ENCODE measurements at regions of chr17 and their contacts with region 1.

Region 1: GRCh38 chr17:66906321-66907278 is 57.9 kb upstream of the CACNG4 start:
- DNase-seq: peak; percentile 33
- H3K4me3 Mint-ChIP-seq: no peak overlapping the region
- H3K27ac Mint-ChIP-seq: no peak overlapping the region
- H3K4me1 Mint-ChIP-seq: peaks cover 9% of the 10 kb centered on the region
- H3K27me3 Mint-ChIP-seq: no peaks in the 10 kb centered on the region

Region 2: DNA sequence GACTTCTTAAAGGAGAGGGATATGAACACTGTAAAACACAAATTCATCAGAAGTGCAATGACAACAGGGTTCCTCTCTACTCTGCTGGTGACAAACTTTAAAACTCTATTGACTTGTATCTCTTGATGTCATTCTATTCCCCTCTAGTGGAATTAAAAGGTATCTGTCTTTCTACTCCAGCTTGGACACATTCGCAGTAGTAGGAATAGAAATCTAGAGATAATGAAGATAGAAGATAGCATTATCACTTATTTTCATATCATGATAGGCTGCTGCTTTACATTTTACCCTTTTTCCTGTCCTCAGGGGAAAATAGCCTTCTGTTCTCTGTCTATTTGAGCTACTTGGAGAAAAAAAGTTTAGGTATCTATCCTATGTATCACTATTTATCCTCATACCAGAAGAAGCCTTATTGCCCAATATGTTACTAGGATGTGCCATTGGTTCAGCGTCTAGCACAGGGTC is 281.3 kb before region 1 on chr17:
- intact Hi-C with region 1: loop called (anchors 1 kb)
- DNase-seq: no peak
- H3K4me3 Mint-ChIP-seq: no peak overlapping the region
- H3K27ac Mint-ChIP-seq: no peak overlapping the region
- H3K4me1 Mint-ChIP-seq: peaks cover 42% of the 10 kb centered on the region
- H3K27me3 Mint-ChIP-seq: no peaks in the 10 kb centered on the region

Region 3: DNA sequence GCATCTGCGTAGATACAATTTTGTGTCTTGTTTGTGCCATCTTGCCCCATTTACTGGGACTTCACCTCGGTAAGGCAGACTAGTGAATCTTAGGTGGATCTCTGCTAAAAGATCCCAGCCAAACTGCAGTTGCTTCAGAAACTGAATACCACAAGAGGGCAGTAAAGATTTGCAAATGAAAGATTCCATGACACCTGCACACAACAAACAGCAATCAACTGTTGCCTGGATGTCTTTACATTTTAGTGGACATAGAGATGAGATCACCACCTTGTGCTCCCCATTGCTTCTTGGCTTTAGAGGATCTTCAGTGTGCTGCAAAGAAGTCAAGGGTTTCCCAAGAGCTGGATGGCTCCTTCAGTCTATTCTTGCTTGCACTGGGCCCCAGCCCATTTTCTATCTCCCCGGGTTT is 190.8 kb before region 1 on chr17:
- intact Hi-C with region 1: loop called (anchors 1 kb)
- DNase-seq: no peak
- H3K4me3 Mint-ChIP-seq: no peak overlapping the region
- H3K27ac Mint-ChIP-seq: peak overlapping the region; percentile 72
- H3K4me1 Mint-ChIP-seq: peaks cover 54% of the 10 kb centered on the region
- H3K27me3 Mint-ChIP-seq: no peaks in the 10 kb centered on the region

Region 4: GRCh38 chr17:66727639-66728570 is 178.7 kb before region 1 on chr17:
- intact Hi-C with region 1: loop called (anchors 1 kb)
- DNase-seq: peak; percentile 31
- H3K4me3 Mint-ChIP-seq: no peak overlapping the region
- H3K27ac Mint-ChIP-seq: peak overlapping the region; percentile 40
- H3K4me1 Mint-ChIP-seq: peaks cover 26% of the 10 kb centered on the region
- H3K27me3 Mint-ChIP-seq: no peaks in the 10 kb centered on the region

Measured in activated T-helper 1 cell treated with anti-CD3 and anti-CD28 coated beads, Interleukin-12 subunit alpha, Interleukin-12 subunit beta, Interleukin-2, Interleukin-4 antibody, amounts not matched to agents 30 ng/mL and 10 ng/mL and 1 ng/mL, durations not matched to agents 14 hours and 24 hours and 36 hours (primary cell).